ENCODE measurements at regions of chr4 and their contacts with region 1.

Region 1: DNA sequence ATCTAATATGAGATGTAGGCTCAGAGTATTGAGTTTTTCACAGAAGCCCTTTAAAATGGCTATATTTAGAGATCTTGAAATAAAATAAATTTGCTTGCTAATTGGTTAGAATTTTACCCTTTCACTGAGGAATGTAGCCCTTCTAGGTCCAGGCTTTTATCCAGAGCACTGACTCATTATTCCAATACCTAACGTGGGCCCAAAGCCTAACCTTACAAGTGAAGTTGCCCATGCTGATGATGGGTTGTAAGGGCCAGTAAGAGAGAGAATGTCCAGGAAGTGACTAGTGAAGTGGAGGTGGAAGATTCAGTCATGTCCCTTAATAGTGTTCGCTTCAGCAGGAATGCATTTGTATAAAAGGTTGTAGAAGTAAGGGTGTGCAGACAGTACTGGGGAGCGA is 155.9 kb downstream of the STIM2 start:
- DNase-seq: no peak
- ATAC-seq: no peak
- H3K4me3 ChIP-seq: no peak overlapping the region
- H3K4me3 Mint-ChIP-seq: peak overlapping the region; percentile 8
- H3K27ac ChIP-seq: no peak overlapping the region
- H3K27ac Mint-ChIP-seq: peak overlapping the region; percentile 75 to 82
- H3K4me1 ChIP-seq: peaks cover 10% of the 10 kb centered on the region
- H3K4me1 Mint-ChIP-seq: peaks cover 40 to 48% of the 10 kb centered on the region in 2 donors
- H3K27me3 ChIP-seq: no peaks in the 10 kb centered on the region
- H3K27me3 Mint-ChIP-seq: no peaks in the 10 kb centered on the region
- CTCF ChIP-seq: no peak

Region 2: DNA sequence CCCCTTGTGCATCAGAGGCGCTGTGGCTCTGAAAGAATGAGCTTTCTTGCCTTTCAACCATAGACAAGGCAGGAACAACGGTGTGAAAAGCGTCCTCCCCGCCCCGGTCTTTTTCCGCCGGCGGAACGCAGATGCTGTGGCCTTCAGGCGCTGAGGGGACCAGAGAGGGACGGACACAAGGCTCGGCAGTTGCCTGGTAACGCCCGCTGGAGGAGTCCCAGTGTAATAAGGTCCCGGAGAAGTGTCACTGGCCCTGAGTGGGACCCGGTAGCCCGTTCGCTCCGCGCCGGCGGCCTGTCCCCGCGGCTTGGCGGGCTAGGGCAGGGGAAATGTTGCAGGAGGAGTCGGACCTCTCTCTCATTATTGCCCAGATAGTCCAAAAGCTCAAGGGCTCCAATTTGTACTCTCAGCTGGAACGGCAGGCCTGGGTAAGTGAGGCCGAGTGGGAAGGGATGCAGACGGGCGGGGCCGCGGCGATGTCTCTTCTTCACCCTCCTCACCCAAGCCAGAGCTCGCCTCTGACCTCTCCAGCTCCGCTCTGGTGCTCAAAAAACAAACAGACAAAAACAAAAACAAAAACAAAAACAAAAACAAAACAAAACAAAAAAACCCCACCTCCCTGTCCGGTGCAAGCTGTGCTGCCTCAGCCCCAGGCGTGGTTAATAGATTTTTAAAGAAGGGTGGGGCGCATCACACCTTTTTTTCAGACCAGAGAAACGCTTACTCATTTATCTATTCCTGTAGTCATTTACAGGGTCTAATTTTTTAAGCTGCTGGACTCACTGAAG is 432.5 kb before region 1 on chr4 and contains the start of gene TBC1D19:
- intact Hi-C with region 1: loop called (anchors 5 kb)
- DNase-seq: peak; percentile 81 to 93
- ATAC-seq: peak; percentile 90 to 97 (median 94)
- H3K4me3 ChIP-seq: peak within 1 kb of the TSS; percentile 86
- H3K4me3 Mint-ChIP-seq: peak within 1 kb of the TSS; percentile 98
- H3K27ac ChIP-seq: peak within 1 kb of the TSS; percentile 94
- H3K27ac Mint-ChIP-seq: peak within 1 kb of the TSS; percentile 90 to 97
- H3K4me1 ChIP-seq: peaks cover 7% of the 10 kb centered on the region
- H3K4me1 Mint-ChIP-seq: peaks cover 30 to 39% of the 10 kb centered on the region in 2 donors
- H3K27me3 ChIP-seq: no peaks in the 10 kb centered on the region
- H3K27me3 Mint-ChIP-seq: no peaks in the 10 kb centered on the region
- CTCF ChIP-seq: no peak
- total RNA-seq, gene TBC1D19: 13.0 to 21.3 (median 16.8) TPM

Region 3: DNA sequence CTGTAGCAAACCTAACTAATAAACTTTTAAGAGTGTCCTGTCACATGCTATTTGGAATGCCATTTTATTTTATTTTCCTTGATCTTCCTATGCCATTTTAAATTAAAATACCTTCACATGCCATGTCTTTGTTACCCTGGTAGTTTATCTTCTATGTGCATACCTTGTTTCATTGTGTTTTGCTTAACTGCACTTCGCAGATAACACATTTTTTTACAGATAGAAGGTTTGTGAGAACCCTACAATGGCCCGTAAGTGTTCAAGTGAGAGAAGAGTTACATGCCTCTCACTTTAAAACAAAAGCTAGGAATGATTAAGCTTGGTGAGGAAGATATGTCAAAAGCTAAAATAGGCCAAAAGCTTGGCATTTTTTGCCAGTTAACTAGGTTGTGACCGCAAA is 588.1 kb after region 1 on chr4:
- intact Hi-C with region 1: no loop called
- DNase-seq: no peak
- ATAC-seq: no peak
- H3K4me3 ChIP-seq: no peak overlapping the region
- H3K4me3 Mint-ChIP-seq: no peak overlapping the region
- H3K27ac ChIP-seq: no peak overlapping the region
- H3K27ac Mint-ChIP-seq: no peak overlapping the region
- H3K4me1 ChIP-seq: no peaks in the 10 kb centered on the region
- H3K4me1 Mint-ChIP-seq: no peaks in the 10 kb centered on the region
- H3K27me3 ChIP-seq: no peaks in the 10 kb centered on the region
- H3K27me3 Mint-ChIP-seq: no peaks in the 10 kb centered on the region
- CTCF ChIP-seq: no peak